Ascending aorta (tissue), 2 donors: ENCODE measurements at regions of chr2 and their contacts with region 1.

Region 1: GRCh38 chr2:73212448-73213176 is 1.4 kb upstream of the SMYD5 start:
- DNase-seq: peak; percentile 19 to 92
- H3K4me3 ChIP-seq: peak overlapping the region in 1 of 2 donors; percentile 12
- H3K27ac ChIP-seq: peak overlapping the region; percentile 81 to 83
- H3K4me1 ChIP-seq: peaks cover 0 to 20% of the 10 kb centered on the region in 2 donors
- H3K27me3 ChIP-seq: no peaks in the 10 kb centered on the region
- CTCF ChIP-seq: peak; percentile 87 to 92 (median 88)

Region 2: DNA sequence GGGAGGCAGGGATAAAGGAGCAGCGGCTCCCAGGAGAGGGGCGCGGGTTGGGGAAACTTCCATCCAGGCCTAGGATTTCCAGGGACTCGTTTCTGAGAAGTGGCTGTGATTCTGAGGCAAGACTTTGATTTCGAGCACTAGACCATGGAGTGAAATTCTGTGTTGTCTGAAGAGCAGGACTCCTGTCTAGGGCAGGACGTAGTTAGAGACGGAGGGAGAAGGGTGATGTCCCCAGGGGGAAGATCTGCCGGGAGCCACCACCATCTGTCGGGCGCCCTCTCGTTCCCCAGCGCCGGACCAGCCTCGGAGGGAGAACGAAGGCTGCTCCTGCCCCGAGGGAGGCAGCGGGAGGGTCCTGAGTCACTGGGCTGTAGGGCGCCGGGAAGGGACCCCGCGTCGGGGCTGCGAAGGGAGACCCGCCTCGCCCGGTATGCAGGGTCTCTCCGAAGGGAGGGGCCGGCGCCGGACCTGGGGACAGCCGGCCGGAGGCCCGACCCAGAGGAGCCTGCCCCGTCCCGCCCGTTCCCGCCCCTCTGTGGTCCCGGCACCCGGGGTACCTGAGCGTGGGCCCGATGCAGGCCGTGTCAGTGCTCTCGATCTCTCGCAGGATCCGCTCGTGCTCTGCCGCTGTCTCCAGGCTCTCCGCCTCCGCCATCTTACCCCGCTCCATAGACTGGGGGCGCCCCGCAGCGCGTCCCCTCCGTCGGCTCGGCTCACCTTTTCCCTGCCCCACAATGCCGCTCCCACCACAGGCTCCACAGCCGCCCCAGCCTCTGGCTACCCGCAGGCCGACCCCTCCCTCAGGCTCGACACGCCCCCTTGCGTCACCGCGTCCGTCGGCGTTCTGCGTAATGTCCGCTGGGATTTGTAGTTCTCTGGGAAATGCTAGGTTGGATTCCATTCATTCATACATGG is 387.1 kb before region 1 on chr2 and contains the start of gene EXOC6B:
- intact Hi-C with region 1: loop called (anchors 10 kb)
- DNase-seq: peak; percentile 58 to 94
- H3K4me3 ChIP-seq: peak within 1 kb of the TSS; percentile 75 to 77
- H3K27ac ChIP-seq: peak within 1 kb of the TSS; percentile 70 to 75
- H3K4me1 ChIP-seq: peaks cover 0 to 4% of the 10 kb centered on the region in 2 donors
- H3K27me3 ChIP-seq: no peaks in the 10 kb centered on the region
- CTCF ChIP-seq: peak in 1 of 3 experiments; percentile 14
- total RNA-seq, gene EXOC6B: 32.4 TPM

Region 3: DNA sequence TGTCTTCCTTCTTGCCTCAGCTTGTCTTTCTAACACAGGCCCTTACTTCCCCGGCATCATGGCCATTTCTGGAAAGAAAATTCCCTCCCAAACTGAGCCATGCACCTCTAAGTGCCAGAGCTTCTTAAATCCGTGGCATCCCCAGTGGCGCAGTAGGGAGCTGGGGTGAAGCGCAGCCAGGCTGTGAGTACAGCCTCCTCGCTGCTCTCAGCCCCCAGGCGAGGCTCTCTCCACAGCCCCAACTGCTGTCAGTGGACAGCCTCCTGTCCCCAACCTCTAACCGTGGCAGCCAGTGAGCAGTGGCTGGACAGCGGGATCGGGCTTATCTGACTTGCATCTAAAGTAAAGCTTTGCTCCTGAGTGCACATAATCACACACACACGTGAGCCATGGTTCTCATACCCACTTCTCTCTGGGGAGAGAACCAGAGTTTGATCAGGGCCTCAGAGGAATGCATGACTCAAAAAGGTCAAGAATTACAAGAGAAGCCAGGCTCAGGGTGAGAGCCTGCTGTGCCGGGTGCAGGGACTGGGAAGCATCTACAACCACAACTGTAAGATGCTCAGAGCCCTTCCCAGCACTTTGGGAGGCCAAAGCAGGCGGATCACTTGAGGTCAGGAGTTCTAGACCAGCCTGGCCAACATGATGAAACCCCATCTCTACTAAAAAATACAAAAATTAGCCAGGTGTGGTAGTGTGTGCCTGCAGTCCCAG is 191.8 kb before region 1 on chr2:
- intact Hi-C with region 1: no loop called
- DNase-seq: no peak
- H3K4me3 ChIP-seq: no peak overlapping the region
- H3K27ac ChIP-seq: peak overlapping the region in 1 of 2 donors; percentile 66
- H3K4me1 ChIP-seq: peaks cover 0 to 17% of the 10 kb centered on the region in 2 donors
- H3K27me3 ChIP-seq: no peaks in the 10 kb centered on the region
- CTCF ChIP-seq: no peak

Region 4: GRCh38 chr2:73085691-73086360 is 126.8 kb before region 1 on chr2:
- intact Hi-C with region 1: loop called (anchors 5 kb)
- DNase-seq: peak; percentile 44 to 91
- H3K4me3 ChIP-seq: peak overlapping the region in 1 of 2 donors; percentile 60
- H3K27ac ChIP-seq: no peak overlapping the region
- H3K4me1 ChIP-seq: peaks cover 19 to 58% of the 10 kb centered on the region in 2 donors
- H3K27me3 ChIP-seq: no peaks in the 10 kb centered on the region
- CTCF ChIP-seq: peak; percentile 85 to 97 (median 92)

Region 5: DNA sequence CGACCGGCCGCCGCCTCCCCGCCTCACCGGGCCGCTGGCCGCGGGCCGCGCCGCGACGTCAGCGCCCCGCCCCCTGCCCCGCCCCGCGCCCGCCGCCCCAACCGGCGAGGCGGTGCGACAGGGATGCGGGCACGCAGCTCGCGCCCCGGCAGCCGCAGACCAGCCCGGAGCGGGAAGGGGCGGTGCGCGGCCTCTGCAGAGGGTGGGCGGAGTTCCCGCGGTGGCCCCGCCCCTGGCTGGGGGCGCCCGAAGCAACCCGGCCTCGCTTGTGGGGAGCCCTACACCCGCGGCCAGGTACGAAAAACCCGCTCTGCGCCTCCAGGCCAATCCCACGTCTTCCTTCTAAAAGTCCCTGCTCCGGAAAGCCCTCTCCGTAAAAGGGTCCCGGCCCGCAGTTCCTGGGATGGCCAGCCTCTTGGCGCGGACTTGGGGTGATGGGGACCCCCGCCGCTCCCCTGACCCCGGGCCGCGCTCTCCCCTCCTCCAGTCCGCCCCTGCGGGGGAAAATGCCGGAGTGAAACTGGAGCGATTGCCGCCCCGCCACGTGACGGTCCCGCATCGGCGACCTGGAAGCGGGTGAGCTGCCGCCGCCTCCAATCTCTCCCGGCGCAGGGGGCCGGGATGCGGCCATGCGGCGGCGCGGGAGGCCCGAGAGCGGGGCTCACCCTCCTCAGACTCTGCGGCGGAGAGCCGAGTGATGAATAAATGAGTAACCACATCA is 99.5 kb before region 1 on chr2 and contains the start of gene RAB11FIP5:
- intact Hi-C with region 1: loop called (anchors 5 kb)
- DNase-seq: peak in 1 of 2 donors; percentile 90
- H3K4me3 ChIP-seq: peak within 1 kb of the TSS; percentile 78 to 84
- H3K27ac ChIP-seq: peak within 1 kb of the TSS; percentile 92 to 98
- H3K4me1 ChIP-seq: peaks cover 0 to 18% of the 10 kb centered on the region in 2 donors
- H3K27me3 ChIP-seq: no peaks in the 10 kb centered on the region
- CTCF ChIP-seq: peak in 1 of 3 experiments; percentile 12
- total RNA-seq, gene RAB11FIP5: 95.3 TPM

Region 6: DNA sequence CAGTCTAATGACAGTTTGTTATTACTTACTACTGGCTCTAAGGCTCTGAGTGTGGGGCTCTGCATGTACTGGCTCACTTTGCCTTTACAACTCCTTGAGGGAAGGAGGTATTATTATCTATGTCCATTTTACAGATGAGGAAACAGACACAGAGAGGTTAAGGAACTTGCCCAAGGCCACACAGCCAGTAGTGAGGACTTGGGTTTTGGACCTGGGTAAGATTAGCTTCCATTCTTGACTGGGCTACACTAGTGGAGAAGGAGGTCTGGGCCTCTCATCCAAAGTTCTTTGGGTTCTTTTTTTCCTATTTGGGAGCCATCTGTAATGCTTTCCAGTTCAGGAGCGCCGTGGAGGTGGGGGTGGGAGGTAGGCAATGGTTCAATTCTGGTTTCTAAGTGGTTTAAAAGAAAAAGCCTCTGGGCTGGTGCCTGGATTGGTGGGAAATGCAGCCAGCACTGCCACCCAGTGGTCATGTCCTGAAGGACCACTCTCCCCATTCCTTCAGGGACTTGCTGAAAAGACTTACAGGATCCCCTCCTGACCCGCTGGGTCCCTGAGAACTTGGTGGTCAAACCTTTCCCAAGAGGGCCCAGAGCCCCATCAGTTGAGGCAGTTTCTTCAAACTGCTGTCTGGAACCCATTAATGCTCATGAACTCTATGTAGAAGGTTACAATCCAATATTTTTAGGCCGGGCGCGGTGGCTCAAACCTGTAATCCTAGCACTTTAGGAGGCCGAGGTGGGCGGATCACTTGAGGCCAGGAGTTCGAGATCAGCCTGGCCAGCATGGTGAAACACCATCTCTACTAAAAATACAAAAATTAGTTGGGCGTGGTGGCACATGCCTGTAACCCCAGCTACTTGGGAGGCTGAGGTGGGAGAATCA is 48.9 kb before region 1 on chr2:
- intact Hi-C with region 1: loop called (anchors 5 kb)
- DNase-seq: peak in 1 of 2 donors; percentile 83
- H3K4me3 ChIP-seq: no peak overlapping the region
- H3K27ac ChIP-seq: no peak overlapping the region
- H3K4me1 ChIP-seq: no peaks in the 10 kb centered on the region
- H3K27me3 ChIP-seq: no peaks in the 10 kb centered on the region
- CTCF ChIP-seq: peak; percentile 75 to 86 (median 81)

Region 7: GRCh38 chr2:73233154-73233931 is 20.7 kb after region 1 on chr2 and contains the start of gene PRADC1:
- intact Hi-C with region 1: loop called (anchors 1 kb)
- DNase-seq: peak; percentile 98 to 100
- H3K4me3 ChIP-seq: peak within 1 kb of the TSS; percentile 82 to 85
- H3K27ac ChIP-seq: peak within 1 kb of the TSS; percentile 93 to 96
- H3K4me1 ChIP-seq: peaks cover 4 to 5% of the 10 kb centered on the region in 2 donors
- H3K27me3 ChIP-seq: no peaks in the 10 kb centered on the region
- CTCF ChIP-seq: no peak
- total RNA-seq, gene PRADC1: 77.0 TPM

Region 8: GRCh38 chr2:73350035-73350691 is 137.6 kb after region 1 on chr2:
- intact Hi-C with region 1: no loop called
- DNase-seq: no peak
- H3K4me3 ChIP-seq: no peak overlapping the region
- H3K27ac ChIP-seq: no peak overlapping the region
- H3K4me1 ChIP-seq: no peaks in the 10 kb centered on the region
- H3K27me3 ChIP-seq: no peaks in the 10 kb centered on the region
- CTCF ChIP-seq: no peak